ENCODE measurements at regions of chr5 and their contacts with region 1.

Region 1: DNA sequence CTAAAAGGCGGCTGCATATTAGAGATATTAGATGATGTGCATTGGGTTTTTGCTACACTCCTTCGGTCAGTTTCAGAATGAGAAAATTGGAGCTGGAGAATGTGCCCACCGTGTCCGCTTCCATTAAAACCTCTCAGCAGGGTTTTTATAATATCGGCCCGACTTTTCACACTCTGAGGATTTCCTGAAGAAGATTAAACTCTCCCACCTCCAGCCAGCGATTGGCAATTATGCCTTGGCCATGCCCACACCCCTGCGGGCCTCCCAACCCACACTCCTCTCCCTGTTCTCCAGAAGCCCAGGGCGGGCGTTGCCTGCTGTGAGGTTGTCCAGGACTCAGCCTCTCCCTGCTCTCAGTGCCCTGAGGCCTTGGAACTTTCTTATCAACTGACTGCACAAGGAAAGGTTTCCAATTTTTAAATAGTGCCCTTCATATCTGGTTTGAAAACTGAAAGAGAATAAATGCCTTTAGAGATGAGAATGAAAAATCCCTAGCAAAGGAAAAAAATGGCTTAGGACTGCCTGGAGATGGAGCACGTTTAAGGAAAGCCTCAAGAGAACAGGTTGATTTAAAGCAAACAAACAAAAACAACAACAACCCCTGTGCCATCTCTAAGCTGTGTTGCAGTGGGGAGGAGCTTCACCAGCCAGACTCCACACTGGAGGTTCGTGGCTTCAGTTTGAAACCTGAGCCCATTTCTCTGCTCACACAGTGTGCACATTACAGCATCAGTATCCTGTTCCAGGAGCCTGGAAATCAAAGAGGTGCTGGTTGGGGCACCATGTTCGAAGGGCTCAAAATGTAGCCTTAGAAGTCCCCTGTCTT is 292.9 kb downstream of the NSG2 start:
- DNase-seq: no peak
- H3K4me3 ChIP-seq: no peak overlapping the region
- H3K4me1 ChIP-seq: no peaks in the 10 kb centered on the region
- H3K27me3 ChIP-seq: peaks cover 16% of the 10 kb centered on the region; the same call in 1 of the 2 replicates

Region 2: GRCh38 chr5:173928871-173929574 is 409.4 kb before region 1 on chr5:
- in situ Hi-C with region 1: no loop called
- DNase-seq: no peak
- H3K4me3 ChIP-seq: no peak overlapping the region
- H3K4me1 ChIP-seq: peaks cover 8% of the 10 kb centered on the region
- H3K27me3 ChIP-seq: no peaks in the 10 kb centered on the region

Region 3: GRCh38 chr5:174735498-174736330 is 397.3 kb after region 1 on chr5:
- in situ Hi-C with region 1: loop called (anchors 10 kb)
- DNase-seq: peak in 1 of 2 experiments; percentile 72
- H3K4me3 ChIP-seq: peak overlapping the region; percentile 19
- H3K4me1 ChIP-seq: peaks cover 4% of the 10 kb centered on the region; the same call in 1 of the 2 replicates
- H3K27me3 ChIP-seq: no peaks in the 10 kb centered on the region